GM23248 (cell line): ENCODE measurements at regions of chr1 and their contacts with region 1.

Region 1: DNA sequence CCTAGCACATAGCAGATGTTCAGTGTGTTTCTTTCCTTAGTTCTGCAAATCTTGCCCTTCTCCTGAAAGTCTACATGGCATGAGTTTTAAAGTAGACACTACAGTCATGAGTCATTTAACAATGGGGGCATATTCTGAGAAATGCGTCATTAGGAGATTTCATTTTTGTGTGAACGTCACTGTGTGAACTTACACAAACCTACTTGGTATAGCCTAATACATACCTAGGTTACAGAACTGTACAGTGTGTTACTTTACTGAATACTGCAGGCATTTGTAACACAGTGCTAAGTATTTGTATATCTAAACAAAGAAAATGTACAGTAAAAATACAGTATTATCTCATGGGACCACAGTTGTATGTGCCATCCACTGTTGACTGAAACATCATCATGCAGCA is 10.0 kb downstream of the TTF2 start:
- DNase-seq: no peak
- H3K4me3 ChIP-seq: no peak overlapping the region
- H3K27ac ChIP-seq: no peak overlapping the region
- H3K4me1 ChIP-seq: no peaks in the 10 kb centered on the region
- H3K27me3 ChIP-seq: no peaks in the 10 kb centered on the region

Region 2: GRCh38 chr1:116902032-116902738 is 167.9 kb before region 1 on chr1:
- in situ Hi-C with region 1: no loop called
- DNase-seq: no peak
- H3K4me3 ChIP-seq: no peak overlapping the region
- H3K27ac ChIP-seq: no peak overlapping the region
- H3K4me1 ChIP-seq: no peaks in the 10 kb centered on the region
- H3K27me3 ChIP-seq: no peaks in the 10 kb centered on the region

Region 3: GRCh38 chr1:117121776-117122697 is 51.9 kb after region 1 on chr1:
- in situ Hi-C with region 1: loop called (anchors 5 kb)
- DNase-seq: peak; percentile 99
- H3K4me3 ChIP-seq: peak overlapping the region; percentile 81
- H3K27ac ChIP-seq: peak overlapping the region; percentile 76
- H3K4me1 ChIP-seq: no peaks in the 10 kb centered on the region
- H3K27me3 ChIP-seq: no peaks in the 10 kb centered on the region